ENCODE measurements at regions of chr2 and their contacts with region 1.

Region 1: GRCh38 chr2:231800493-231801091 is 14.3 kb downstream of the COPS7B start:
- DNase-seq: peak; percentile 68
- ATAC-seq: peak; percentile 80
- H3K4me3 Mint-ChIP-seq: no peak overlapping the region
- H3K27ac Mint-ChIP-seq: no peak overlapping the region
- H3K4me1 Mint-ChIP-seq: no peaks in the 10 kb centered on the region
- H3K27me3 Mint-ChIP-seq: no peaks in the 10 kb centered on the region

Region 2: DNA sequence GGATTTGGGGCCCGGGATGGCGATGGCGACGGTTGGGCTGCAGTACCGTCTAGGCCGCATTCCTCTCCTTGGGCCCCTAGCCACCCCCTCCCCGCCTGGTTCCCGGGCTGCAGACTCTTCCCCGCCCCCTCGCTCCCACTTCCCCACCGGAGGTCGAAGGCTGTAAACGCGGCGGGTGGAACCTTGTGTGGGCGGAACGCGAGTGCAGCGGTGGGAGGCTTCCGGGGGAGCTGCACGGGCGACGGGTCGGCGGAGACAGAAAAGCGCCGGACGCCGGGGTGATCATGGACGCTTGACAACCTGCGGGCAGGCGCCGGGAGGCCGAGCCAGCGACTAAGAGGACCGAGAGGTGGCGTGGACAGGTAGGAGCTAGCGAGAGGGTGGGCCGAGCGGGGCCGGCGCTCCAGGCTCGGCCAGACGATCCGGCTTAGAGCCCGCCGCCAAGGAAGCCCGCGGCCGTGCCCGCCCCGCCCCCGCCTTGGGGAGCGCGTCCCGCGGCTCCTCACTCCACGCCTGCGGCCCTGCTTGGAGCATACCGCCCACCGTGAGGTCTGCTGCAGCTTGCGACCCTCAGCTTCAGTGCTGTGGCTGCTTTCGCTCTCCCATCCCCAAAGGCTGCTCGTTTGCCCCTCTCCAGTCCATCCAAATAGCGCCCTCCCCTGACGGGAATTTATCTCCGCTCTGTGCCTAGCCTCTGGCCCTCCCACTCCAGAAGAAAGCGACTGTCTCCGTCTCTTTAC is 14.2 kb before region 1 on chr2 and contains the start of gene COPS7B:
- CTCF ChIA-PET with region 1: interaction called, 16 read pairs
- POLR2A ChIA-PET with region 1: interaction called, 5 read pairs
- DNase-seq: peak; percentile 84
- ATAC-seq: peak; percentile 73
- H3K4me3 Mint-ChIP-seq: peak within 1 kb of the TSS; percentile 91
- H3K27ac Mint-ChIP-seq: peak within 1 kb of the TSS; percentile 84
- H3K4me1 Mint-ChIP-seq: peaks cover 51% of the 10 kb centered on the region
- H3K27me3 Mint-ChIP-seq: no peaks in the 10 kb centered on the region
- total RNA-seq, gene COPS7B: 47.5 to 47.7 TPM

Measured in activated CD8-positive, alpha-beta T cell treated with anti-CD3 and anti-CD28 coated beads, Interleukin-2, amount 10 ng/mL, durations not matched to agents 7 days and 5 days (primary cell).